Activated naive CD4-positive, alpha-beta T cell treated with anti-CD3 and anti-CD28 coated beads, Interleukin-2, amount 10 ng/mL, durations not matched to agents 7 days and 5 days (primary cell): ENCODE measurements at regions of chr10 and their contacts with region 1.

Region 1: DNA sequence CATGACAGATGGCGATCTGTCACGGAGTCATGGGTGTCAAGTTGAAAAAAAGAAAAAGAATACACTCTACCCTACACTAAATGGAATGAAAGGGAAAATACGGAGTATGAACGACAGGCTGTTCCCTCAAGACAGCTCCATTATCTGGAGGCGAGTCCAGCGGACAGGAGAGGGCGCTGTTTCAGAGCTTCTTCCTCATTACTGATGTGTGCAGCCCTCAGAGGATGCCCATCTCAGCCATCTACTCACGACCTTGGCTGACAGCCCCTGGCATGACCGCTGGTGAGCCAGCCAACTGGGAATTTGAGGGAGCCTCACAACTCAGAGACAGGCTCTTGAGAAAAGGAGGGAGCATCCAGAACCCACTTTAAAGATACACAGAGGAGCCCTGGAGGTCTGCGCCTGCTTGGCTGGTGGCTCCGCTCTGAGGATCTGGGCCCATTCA is 49.6 kb upstream of the SMNDC1 start:
- DNase-seq: peak; percentile 90
- H3K4me3 Mint-ChIP-seq: peak overlapping the region; percentile 6
- H3K27ac Mint-ChIP-seq: peak overlapping the region; percentile 70
- H3K4me1 Mint-ChIP-seq: peaks cover 61% of the 10 kb centered on the region
- H3K27me3 Mint-ChIP-seq: peaks cover 15% of the 10 kb centered on the region

Region 2: GRCh38 chr10:109529258-109529657 is 825.1 kb before region 1 on chr10:
- CTCF ChIA-PET with region 1: no interaction called
- DNase-seq: no peak
- H3K4me3 Mint-ChIP-seq: no peak overlapping the region
- H3K27ac Mint-ChIP-seq: no peak overlapping the region
- H3K4me1 Mint-ChIP-seq: no peaks in the 10 kb centered on the region
- H3K27me3 Mint-ChIP-seq: no peaks in the 10 kb centered on the region

Region 3: GRCh38 chr10:110168601-110169481 is 185.5 kb before region 1 on chr10:
- CTCF ChIA-PET with region 1: no interaction called
- DNase-seq: no peak
- H3K4me3 Mint-ChIP-seq: no peak overlapping the region
- H3K27ac Mint-ChIP-seq: no peak overlapping the region
- H3K4me1 Mint-ChIP-seq: peaks cover 31% of the 10 kb centered on the region
- H3K27me3 Mint-ChIP-seq: peaks cover 98% of the 10 kb centered on the region

Region 4: DNA sequence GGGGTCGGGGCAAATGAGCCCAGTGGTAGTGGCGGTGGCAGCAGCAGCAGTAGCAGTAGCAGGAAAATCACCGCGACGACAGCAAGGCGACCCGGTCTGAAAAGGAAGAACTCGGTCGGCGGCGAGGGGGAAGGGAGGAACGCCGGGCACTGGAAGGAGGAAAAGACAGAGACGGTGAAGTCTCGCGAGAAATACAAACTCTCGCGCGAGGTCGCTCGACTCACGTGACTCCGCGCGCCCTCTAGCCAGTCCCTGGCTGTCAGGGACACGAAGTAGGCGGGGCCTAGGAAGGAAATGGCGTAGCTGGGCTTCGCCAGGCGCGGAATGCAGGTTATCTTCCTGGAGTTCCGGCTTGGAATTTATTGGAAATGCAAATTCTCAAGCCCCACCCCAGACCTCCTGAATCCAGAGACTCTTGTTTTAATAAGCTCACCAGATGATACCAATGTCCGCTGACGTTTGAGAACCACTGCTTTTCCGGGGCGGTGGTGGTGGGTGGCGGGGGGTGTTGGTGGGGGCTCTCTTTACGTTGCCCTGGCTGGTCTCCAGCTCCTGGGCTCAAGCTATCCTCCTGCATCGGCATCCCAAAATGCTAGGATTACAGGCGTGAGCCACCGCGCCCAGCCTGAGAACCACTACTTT is 49.4 kb before region 1 on chr10 and contains the start of gene SMNDC1:
- CTCF ChIA-PET with region 1: interaction called, 10 read pairs
- DNase-seq: peak; percentile 98
- H3K4me3 Mint-ChIP-seq: peak within 1 kb of the TSS; percentile 93
- H3K27ac Mint-ChIP-seq: peak within 1 kb of the TSS; percentile 98
- H3K4me1 Mint-ChIP-seq: peaks cover 53% of the 10 kb centered on the region
- H3K27me3 Mint-ChIP-seq: no peaks in the 10 kb centered on the region

Region 5: GRCh38 chr10:110335314-110336064 is 18.9 kb before region 1 on chr10:
- CTCF ChIA-PET with region 1: interaction called, 14 read pairs
- DNase-seq: no peak
- H3K4me3 Mint-ChIP-seq: peak overlapping the region; percentile 44
- H3K27ac Mint-ChIP-seq: peak overlapping the region; percentile 88
- H3K4me1 Mint-ChIP-seq: peaks cover 36% of the 10 kb centered on the region
- H3K27me3 Mint-ChIP-seq: peaks cover 12% of the 10 kb centered on the region

Region 6: GRCh38 chr10:110395725-110396651 is 41.6 kb after region 1 on chr10:
- CTCF ChIA-PET with region 1: interaction called, 13 read pairs
- DNase-seq: no peak
- H3K4me3 Mint-ChIP-seq: no peak overlapping the region
- H3K27ac Mint-ChIP-seq: no peak overlapping the region
- H3K4me1 Mint-ChIP-seq: peaks cover 14% of the 10 kb centered on the region
- H3K27me3 Mint-ChIP-seq: peaks cover 30% of the 10 kb centered on the region

Region 7: GRCh38 chr10:110429289-110429688 is 74.9 kb after region 1 on chr10:
- CTCF ChIA-PET with region 1: interaction called, 15 read pairs
- DNase-seq: peak; percentile 19
- H3K4me3 Mint-ChIP-seq: no peak overlapping the region
- H3K27ac Mint-ChIP-seq: no peak overlapping the region
- H3K4me1 Mint-ChIP-seq: peaks cover 20% of the 10 kb centered on the region
- H3K27me3 Mint-ChIP-seq: peaks cover 20% of the 10 kb centered on the region

Region 8: GRCh38 chr10:110530131-110530831 is 175.9 kb after region 1 on chr10:
- CTCF ChIA-PET with region 1: interaction called, 23 read pairs
- DNase-seq: peak; percentile 34
- H3K4me3 Mint-ChIP-seq: no peak overlapping the region
- H3K27ac Mint-ChIP-seq: peak overlapping the region; percentile 5
- H3K4me1 Mint-ChIP-seq: peaks cover 58% of the 10 kb centered on the region
- H3K27me3 Mint-ChIP-seq: peaks cover 46% of the 10 kb centered on the region

Region 9: DNA sequence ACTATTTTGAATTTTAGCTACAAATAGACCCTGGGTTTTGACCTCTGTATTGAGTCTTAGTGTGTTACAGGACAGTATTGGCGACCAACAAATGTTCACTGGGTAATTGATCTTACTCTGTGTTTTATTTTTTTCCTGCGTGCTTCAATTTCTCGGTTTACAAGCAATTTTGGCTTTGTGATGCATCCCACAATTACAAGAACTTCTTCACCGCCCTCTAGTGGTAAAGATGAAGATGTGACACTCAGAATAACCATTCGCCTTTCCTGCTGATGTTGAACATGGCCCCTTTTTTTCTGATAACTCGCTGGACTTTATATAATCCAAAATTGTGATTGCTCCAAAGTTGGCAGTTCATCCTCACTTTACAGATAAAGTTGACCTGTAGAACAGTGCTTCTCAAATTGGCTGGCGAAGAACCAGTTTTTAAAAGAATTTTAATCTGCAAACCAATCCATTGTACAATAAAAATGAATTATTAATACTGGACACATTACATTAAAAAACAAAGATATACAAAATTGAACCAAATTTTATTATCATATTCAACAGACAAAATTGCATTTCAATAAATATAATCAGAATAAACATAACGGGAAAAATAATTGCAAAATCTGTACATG is 192.9 kb after region 1 on chr10:
- CTCF ChIA-PET with region 1: interaction called, 56 read pairs
- DNase-seq: no peak
- H3K4me3 Mint-ChIP-seq: no peak overlapping the region
- H3K27ac Mint-ChIP-seq: no peak overlapping the region
- H3K4me1 Mint-ChIP-seq: peaks cover 7% of the 10 kb centered on the region
- H3K27me3 Mint-ChIP-seq: peaks cover 25% of the 10 kb centered on the region